WTC11 (cell line): ENCODE measurements at regions of chr11 and their contacts with region 1.

Region 1: GRCh38 chr11:9534791-9535781 is 38.4 kb upstream of the WEE1 start:
- DNase-seq: peak; percentile 89
- ATAC-seq: peak; percentile 66
- H3K4me3 Mint-ChIP-seq: no peak overlapping the region
- H3K27ac Mint-ChIP-seq: peak overlapping the region; percentile 84; the same call in 1 of the 2 replicates
- H3K4me1 Mint-ChIP-seq: peaks cover 37% of the 10 kb centered on the region
- H3K27me3 Mint-ChIP-seq: no peaks in the 10 kb centered on the region
- CTCF ChIP-seq: peak; percentile 93

Region 2: GRCh38 chr11:9460322-9461067 is 74.6 kb before region 1 on chr11 and contains the start of gene ZNF143:
- CTCF ChIA-PET with region 1: interaction called, 15 read pairs
- POLR2A ChIA-PET with region 1: interaction called, 5 read pairs
- DNase-seq: peak; percentile 100
- ATAC-seq: peak; percentile 96
- H3K4me3 Mint-ChIP-seq: peak within 1 kb of the TSS; percentile 98
- H3K27ac Mint-ChIP-seq: peak within 1 kb of the TSS; percentile 99
- H3K4me1 Mint-ChIP-seq: peaks cover 18% of the 10 kb centered on the region
- H3K27me3 Mint-ChIP-seq: no peaks in the 10 kb centered on the region
- CTCF ChIP-seq: no peak
- total RNA-seq, gene ZNF143: 34.0 to 35.8 TPM (median 34.0 TPM) in 3 replicates

Region 3: DNA sequence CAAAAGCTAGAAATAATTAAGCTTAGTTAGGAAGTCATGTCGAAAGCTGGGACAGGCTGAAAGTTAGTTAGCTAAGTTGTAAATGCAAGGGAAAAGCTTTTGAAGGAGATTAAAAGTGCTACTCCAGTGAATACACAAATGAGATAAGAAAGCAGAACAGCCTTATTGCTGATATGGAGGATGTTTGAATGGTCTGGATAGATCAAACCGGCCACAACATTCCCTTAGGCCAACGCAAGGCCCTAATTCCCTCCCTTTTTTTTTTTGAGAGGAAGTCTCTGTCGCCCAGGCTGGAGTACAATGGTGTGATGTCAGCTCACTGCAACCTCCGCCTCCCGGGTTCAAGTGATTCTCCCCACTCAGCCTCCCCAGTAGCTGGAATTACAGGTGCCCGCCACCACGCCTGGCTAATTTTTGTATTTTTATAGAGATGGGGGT is 15.1 kb after region 1 on chr11:
- CTCF ChIA-PET with region 1: interaction called, 34 read pairs
- POLR2A ChIA-PET with region 1: no interaction called
- DNase-seq: no peak
- ATAC-seq: no peak
- H3K4me3 Mint-ChIP-seq: no peak overlapping the region
- H3K27ac Mint-ChIP-seq: no peak overlapping the region
- H3K4me1 Mint-ChIP-seq: peaks cover 3% of the 10 kb centered on the region; the same call in 1 of the 2 replicates
- H3K27me3 Mint-ChIP-seq: no peaks in the 10 kb centered on the region; the same call in 1 of the 2 replicates
- CTCF ChIP-seq: no peak

Region 4: GRCh38 chr11:9573052-9573774 is 38.1 kb after region 1 on chr11 and contains the start of gene WEE1:
- CTCF ChIA-PET with region 1: interaction called, 49 read pairs
- POLR2A ChIA-PET with region 1: interaction called, 22 read pairs
- DNase-seq: peak; percentile 99
- ATAC-seq: peak; percentile 90
- H3K4me3 Mint-ChIP-seq: peak within 1 kb of the TSS; percentile 95
- H3K27ac Mint-ChIP-seq: peak within 1 kb of the TSS; percentile 95
- H3K4me1 Mint-ChIP-seq: peaks cover 64% of the 10 kb centered on the region
- H3K27me3 Mint-ChIP-seq: no peaks in the 10 kb centered on the region
- CTCF ChIP-seq: no peak
- total RNA-seq, gene WEE1: 85.5 to 109 TPM (median 91.3 TPM) in 3 replicates

Region 5: DNA sequence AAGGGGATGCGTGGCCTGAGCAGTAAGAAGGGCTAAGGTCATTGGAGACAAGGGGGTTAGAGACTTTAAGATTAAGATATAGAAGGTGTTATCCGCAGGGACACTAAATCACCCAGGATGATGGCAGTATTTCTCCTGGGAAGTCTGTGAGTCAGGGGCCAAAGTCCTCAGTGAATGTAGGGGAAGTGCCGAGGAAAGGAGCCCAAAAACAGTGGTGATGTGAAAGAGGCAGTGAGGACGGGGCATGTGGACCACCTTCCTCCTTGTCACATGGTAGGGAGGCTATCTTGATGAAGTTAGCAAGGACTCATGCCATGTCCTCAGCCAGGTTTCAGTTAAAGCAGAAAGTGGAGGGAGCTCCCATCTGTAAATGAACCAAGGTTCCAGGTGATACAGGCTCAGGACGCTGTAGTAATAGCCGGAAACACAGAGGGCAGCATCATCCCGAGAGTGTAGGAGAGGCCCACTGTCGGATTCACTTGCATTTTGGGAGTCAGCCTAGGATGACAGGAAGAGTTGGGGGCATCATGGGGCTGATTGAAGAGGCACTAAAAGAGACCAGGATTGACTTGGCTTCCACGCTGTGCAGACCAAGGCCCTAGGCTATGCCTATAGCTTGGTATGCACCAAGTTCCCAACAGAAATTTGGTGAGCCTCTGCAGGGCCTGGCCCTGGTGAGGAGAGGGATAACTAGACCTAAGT is 71.9 kb after region 1 on chr11:
- CTCF ChIA-PET with region 1: interaction called, 44 read pairs
- POLR2A ChIA-PET with region 1: no interaction called
- DNase-seq: peak; percentile 53
- ATAC-seq: peak; percentile 92
- H3K4me3 Mint-ChIP-seq: no peak overlapping the region
- H3K27ac Mint-ChIP-seq: 0 out of 2 replicates have a peak overlapping the region, but pooled peaks have one; percentile 6
- H3K4me1 Mint-ChIP-seq: peaks cover 32% of the 10 kb centered on the region
- H3K27me3 Mint-ChIP-seq: no peaks in the 10 kb centered on the region
- CTCF ChIP-seq: no peak

Region 6: DNA sequence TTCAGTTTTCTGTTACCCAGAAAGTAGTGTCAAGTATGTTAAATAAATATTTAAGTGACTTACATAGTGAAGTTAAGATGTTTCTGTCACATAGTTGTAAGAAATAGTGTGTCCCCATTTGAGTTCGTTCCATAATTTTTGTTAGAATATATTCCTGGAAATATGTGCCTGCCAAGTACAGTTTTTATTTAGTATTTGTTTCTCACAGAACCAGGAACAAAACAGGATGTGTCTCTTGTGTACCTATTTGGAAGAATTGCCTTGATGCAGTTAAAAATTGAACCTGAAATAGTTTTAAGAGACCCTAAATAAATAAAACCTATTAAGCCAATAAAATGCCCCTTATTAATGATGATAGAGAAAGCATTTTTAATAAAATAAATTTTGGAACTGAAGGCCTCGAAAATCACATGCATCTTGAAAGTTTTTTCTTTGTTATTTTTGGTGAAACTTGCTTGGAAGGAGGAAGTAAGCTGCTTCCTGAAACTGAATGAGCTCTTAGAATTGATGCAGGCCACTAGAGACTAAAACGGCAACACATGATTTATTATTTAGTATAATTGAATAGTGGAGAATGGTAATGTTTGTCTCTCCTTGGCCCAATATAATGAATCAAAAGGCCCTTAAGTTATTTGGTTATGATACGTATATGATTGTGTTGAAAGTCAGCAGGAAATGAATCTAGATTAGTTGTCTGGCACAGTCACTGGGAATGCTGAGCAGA is 184.6 kb after region 1 on chr11:
- CTCF ChIA-PET with region 1: interaction called, 11 read pairs
- POLR2A ChIA-PET with region 1: no interaction called
- DNase-seq: no peak
- ATAC-seq: no peak
- H3K4me3 Mint-ChIP-seq: no peak overlapping the region
- H3K27ac Mint-ChIP-seq: no peak overlapping the region
- H3K4me1 Mint-ChIP-seq: peaks cover 15% of the 10 kb centered on the region
- H3K27me3 Mint-ChIP-seq: no peaks in the 10 kb centered on the region
- CTCF ChIP-seq: no peak